ENCODE measurements at regions of chr18 and their contacts with region 1.

Region 1: DNA sequence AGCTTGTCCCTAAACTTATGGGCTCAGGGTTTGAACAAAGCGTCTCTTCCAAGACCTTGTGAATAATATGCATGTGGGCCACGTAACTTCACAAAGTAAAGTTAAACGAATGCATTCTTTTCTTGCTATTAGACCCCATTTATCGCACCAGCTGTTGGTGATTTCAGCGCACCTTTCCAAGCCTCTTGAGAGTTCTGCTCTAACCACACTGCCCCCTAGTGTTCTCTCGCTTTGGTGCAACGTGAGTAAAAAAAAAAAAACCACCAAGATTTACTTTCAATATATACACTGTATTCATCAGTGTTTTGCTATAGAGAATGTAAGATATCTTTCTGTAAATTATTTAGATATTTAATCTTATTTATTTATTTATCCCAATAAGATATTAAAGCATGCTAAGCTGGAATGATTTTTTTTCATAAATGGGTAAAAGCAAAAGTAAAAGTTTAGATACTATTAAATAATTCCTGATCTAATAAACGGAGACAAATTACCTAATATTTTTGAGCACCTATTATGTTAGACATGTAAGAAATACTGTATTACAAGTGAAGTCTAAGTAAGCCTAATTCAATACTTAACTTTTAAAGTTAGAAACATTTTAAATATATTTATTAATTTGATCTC is 459.5 kb downstream of the DLGAP1 start:
- DNase-seq: peak in 1 of 3 donors; percentile 83
- ATAC-seq: peak; percentile 72
- H3K4me3 ChIP-seq: no peak overlapping the region
- H3K4me1 ChIP-seq: no peaks in the 10 kb centered on the region
- CTCF ChIP-seq: peak; percentile 71

Region 2: DNA sequence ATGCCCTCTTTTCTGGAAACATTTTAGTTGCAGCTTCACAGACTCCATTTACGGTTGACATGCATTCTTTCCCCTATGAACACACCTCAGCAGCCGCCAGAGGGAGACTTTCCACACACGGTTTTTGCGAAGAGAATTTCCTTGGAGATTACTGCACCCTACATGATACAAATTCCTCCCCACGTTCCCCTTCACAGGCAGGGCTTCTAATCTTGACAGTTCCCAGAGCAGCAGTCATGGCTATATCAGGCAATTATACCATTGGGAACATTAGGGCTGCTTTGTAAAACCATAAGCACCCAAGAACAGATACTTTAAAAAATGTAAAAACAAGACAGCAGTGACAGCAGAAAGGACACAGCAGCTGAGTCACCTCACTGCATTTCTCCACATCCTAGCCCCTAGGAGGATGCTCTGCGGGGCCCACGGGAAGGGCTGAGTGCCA is 291.8 kb before region 1 on chr18:
- intact Hi-C with region 1: loop called in 1 of 2 experiments (anchors 10 kb)
- DNase-seq: peak in 2 of 3 donors; percentile 78 to 90
- ATAC-seq: peak; percentile 80
- H3K4me3 ChIP-seq: no peak overlapping the region
- H3K4me1 ChIP-seq: no peaks in the 10 kb centered on the region
- CTCF ChIP-seq: peak; percentile 49

Region 3: DNA sequence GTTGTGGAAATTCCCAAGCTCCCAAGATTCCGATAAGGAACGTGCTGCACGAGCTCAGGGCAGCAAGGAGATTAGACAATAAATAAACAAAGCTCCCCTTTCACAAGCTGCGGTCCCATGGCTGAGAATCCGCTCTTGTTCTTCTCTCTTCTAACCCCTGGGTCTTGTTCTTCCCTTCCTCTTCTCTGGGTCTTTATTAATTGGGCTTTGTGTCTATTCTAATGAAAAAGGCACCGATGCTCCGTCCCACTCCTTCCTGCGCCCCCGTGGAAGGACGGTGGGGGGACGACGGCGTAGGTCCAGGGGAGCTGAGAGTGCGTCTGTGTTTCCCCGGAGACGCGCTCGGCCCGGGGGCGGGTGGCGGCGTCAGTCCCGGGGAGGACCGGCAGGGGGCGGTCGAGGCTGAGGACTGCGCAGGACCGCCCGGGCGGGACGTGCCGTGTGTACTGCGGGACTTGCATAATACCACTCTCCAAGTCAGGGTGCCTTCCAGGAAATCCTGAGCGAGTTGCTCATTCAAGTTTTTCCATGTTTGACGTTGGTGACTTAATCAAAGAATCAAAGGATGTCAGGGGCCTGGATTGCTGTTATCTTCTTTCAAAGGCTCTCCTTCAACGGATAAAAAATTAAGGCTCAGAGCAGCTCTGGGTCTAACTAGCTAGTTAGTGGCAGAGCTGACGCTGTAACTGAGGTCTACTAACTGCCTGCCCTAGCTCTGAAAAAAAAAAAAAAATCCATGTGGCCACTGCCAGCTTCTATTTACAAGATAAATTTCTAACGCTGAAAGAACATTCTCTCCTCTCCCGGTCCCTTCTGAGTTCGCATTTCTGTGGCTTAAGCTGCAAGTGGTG is 224.2 kb before region 1 on chr18:
- intact Hi-C with region 1: loop called (anchors 5 to 10 kb)
- DNase-seq: peak; percentile 84 to 91 (median 90)
- ATAC-seq: peak; percentile 100
- H3K4me3 ChIP-seq: no peak overlapping the region
- H3K4me1 ChIP-seq: peaks cover 5% of the 10 kb centered on the region
- CTCF ChIP-seq: peak; percentile 91

Region 4: DNA sequence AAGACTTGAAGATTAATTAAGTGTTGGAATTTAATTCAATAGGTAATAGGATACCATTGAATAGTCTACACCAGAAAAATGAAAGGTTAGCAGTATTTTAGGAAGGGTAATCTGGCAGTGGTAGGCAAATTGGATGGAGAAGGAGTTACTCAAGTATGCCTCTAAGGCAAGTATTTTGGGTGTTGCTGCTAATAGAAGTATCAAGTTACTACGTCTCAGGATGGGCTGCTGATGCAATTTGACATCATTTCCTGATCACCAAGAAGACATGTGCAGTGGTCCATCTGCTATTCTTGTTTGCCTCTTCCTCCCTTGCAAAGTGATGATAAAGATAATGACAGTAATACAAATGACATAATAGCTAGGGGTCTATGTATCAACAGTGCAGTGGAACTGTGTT is 60.3 kb before region 1 on chr18:
- intact Hi-C with region 1: no loop called
- DNase-seq: no peak
- ATAC-seq: no peak
- H3K4me3 ChIP-seq: no peak overlapping the region
- H3K4me1 ChIP-seq: no peaks in the 10 kb centered on the region
- CTCF ChIP-seq: no peak

Measured in mucosa of descending colon (tissue), 3 donors.